ENCODE measurements at regions of chr6 and their contacts with region 1.

Region 1: GRCh38 chr6:31619805-31620585 is 520 bp upstream of the PRRC2A start:
- DNase-seq: peak; percentile 81 to 97 (median 94)
- ATAC-seq: peak; percentile 88
- H3K4me3 ChIP-seq: peak overlapping the region; percentile 90
- H3K4me3 Mint-ChIP-seq: peak overlapping the region; percentile 87 to 97 (median 93)
- H3K27ac ChIP-seq: peak overlapping the region; percentile 96
- H3K27ac Mint-ChIP-seq: peak overlapping the region; percentile 95 to 99 (median 96)
- H3K4me1 ChIP-seq: peaks cover 14 to 23% of the 10 kb centered on the region in 2 donors
- H3K4me1 Mint-ChIP-seq: peaks cover 26 to 60% (median 53%) of the 10 kb centered on the region in 7 donors
- H3K27me3 ChIP-seq: no peaks in the 10 kb centered on the region
- H3K27me3 Mint-ChIP-seq: no peaks in the 10 kb centered on the region

Region 2: DNA sequence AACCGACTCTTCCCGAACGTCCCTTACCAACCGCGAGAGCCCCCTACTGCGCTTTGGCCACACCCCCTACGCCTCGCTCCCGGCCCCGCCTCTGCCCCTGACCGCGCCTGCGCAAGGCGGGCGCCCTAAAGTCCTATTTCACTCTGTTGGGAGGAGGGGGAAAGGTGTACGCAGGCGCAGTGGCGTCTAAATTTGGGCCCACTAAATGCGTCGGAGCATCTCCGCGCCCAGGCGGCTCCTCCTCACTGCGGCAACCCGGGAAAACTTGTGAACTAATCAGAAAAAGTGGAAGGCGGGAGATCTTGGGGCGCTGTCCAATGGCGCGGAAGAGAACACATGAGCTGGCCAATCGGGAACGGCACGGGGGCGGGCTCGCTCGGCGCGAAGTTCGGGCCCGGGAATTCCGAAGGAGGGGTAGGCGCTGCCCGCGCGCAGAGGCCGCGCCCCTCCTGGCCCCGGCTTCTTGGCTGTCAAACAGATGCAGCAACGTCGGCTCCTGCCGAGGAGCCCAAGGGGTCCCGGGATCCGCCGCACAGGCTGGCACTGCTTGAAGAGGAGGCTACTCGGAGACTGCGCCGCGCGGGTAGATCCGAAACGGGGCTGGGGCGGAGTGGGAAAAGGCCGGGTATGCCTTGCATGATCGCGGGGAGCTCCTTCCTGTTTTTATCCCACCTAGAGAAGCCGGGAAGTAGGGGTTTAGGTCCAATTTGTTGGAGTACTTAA is 461.7 kb before region 1 on chr6 and contains the start of gene TCF19:
- CTCF ChIA-PET with region 1: no interaction called
- POLR2A ChIA-PET with region 1: no interaction called
- intact Hi-C with region 1: loop called in 1 of 2 experiments (anchors 1 kb)
- DNase-seq: peak; percentile 97 to 99 (median 98)
- ATAC-seq: peak; percentile 96
- H3K4me3 ChIP-seq: peak within 1 kb of the TSS; percentile 82
- H3K4me3 Mint-ChIP-seq: peak within 1 kb of the TSS; percentile 82 to 97 (median 91)
- H3K27ac ChIP-seq: peak within 1 kb of the TSS; percentile 82
- H3K27ac Mint-ChIP-seq: peak within 1 kb of the TSS; percentile 62 to 96 (median 89)
- H3K4me1 ChIP-seq: peaks cover 12 to 18% of the 10 kb centered on the region in 2 donors
- H3K4me1 Mint-ChIP-seq: peaks cover 21 to 56% (median 29%) of the 10 kb centered on the region in 7 donors
- H3K27me3 ChIP-seq: no peaks in the 10 kb centered on the region
- H3K27me3 Mint-ChIP-seq: peaks cover 0 to 2% (median 0%) of the 10 kb centered on the region in 5 donors
- total RNA-seq, gene TCF19: 4.3 to 78.9 (median 9.4) TPM

Region 3: DNA sequence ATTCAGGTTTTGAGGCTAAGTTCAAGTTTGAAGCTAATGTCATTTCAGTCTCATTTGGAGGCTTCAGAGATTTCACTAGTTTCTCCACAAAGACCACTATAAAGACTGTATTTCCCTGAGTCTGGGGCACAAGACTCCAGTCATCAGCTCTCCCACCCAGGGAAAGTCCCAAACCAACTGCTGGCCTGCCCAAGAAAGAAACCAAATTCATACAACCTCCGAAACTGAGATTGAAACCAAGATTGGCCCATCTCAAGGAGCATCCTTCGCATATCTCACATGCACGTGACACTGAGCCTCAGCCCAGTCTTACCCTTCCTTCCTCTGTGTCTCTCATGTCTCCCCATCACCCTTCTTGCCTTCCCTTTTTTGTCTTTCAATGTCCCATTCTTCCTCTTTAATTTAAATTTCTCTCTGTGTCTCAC is 51.4 kb before region 1 on chr6:
- CTCF ChIA-PET with region 1: interaction called, 4 read pairs
- POLR2A ChIA-PET with region 1: interaction called, 3,078 read pairs
- intact Hi-C with region 1: loop called in 1 of 2 experiments (anchors 2 kb)
- DNase-seq: peak in 7 of 9 donors; percentile 58 to 84 (median 68)
- ATAC-seq: peak; percentile 82
- H3K4me3 ChIP-seq: peak overlapping the region; percentile 23
- H3K4me3 Mint-ChIP-seq: peak overlapping the region; percentile 39 to 77 (median 68)
- H3K27ac ChIP-seq: peak overlapping the region; percentile 77
- H3K27ac Mint-ChIP-seq: peak overlapping the region; percentile 84 to 99 (median 94)
- H3K4me1 ChIP-seq: peaks cover 55 to 58% of the 10 kb centered on the region in 2 donors
- H3K4me1 Mint-ChIP-seq: peaks cover 57 to 88% (median 77%) of the 10 kb centered on the region in 7 donors
- H3K27me3 ChIP-seq: no peaks in the 10 kb centered on the region
- H3K27me3 Mint-ChIP-seq: peaks cover 0 to 41% (median 0%) of the 10 kb centered on the region in 5 donors

Region 4: DNA sequence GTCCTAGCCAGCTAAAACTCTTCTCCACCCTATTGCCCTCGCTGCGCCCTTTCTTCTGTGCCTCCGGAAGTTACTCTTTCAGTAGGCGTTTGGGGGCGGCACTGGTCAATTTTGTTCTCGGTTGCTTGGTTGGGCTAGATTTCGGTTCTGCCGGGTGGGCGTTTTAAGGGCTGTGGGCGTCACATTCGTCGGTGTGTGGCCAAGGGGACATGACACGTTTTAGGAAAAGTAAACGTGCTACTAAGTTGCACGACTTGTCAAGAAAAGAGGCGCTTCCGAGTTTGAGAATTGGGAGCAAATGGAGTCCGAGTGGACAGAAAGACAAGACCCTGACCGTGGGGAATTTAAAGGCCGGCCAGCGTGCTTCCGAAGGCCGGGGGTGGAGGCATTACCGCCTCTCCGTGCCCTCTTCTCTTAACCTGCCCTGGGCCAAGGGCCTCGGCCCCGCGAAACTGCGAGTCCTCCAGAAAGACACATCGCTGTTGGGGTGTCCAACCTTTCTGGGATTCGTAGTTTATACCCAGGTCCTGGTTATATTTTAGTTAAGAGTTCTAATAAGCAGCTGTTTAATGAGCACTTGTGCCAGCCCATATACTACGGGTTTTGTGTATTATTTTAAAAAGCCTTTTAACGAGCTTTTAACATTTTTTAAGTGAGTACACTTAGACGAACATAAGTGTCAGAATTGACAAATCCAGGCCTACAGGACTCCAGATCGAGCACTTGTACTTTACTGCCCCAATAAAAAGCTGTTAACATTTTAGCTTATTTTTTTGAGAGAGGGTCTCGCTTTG is 33.1 kb after region 1 on chr6:
- CTCF ChIA-PET with region 1: interaction called, 3 read pairs
- POLR2A ChIA-PET with region 1: interaction called, 43 read pairs
- intact Hi-C with region 1: loop called (anchors 1 kb)
- DNase-seq: peak in 2 of 9 donors; percentile 81 to 89
- ATAC-seq: peak; percentile 77
- H3K4me3 ChIP-seq: peak overlapping the region; percentile 66
- H3K4me3 Mint-ChIP-seq: peak overlapping the region; percentile 96 to 100 (median 99)
- H3K27ac ChIP-seq: peak overlapping the region; percentile 95
- H3K27ac Mint-ChIP-seq: peak overlapping the region; percentile 99 to 100 (median 100)
- H3K4me1 ChIP-seq: peaks cover 23 to 30% of the 10 kb centered on the region in 2 donors
- H3K4me1 Mint-ChIP-seq: peaks cover 39 to 71% (median 63%) of the 10 kb centered on the region in 7 donors
- H3K27me3 ChIP-seq: no peaks in the 10 kb centered on the region
- H3K27me3 Mint-ChIP-seq: no peaks in the 10 kb centered on the region

Region 5: DNA sequence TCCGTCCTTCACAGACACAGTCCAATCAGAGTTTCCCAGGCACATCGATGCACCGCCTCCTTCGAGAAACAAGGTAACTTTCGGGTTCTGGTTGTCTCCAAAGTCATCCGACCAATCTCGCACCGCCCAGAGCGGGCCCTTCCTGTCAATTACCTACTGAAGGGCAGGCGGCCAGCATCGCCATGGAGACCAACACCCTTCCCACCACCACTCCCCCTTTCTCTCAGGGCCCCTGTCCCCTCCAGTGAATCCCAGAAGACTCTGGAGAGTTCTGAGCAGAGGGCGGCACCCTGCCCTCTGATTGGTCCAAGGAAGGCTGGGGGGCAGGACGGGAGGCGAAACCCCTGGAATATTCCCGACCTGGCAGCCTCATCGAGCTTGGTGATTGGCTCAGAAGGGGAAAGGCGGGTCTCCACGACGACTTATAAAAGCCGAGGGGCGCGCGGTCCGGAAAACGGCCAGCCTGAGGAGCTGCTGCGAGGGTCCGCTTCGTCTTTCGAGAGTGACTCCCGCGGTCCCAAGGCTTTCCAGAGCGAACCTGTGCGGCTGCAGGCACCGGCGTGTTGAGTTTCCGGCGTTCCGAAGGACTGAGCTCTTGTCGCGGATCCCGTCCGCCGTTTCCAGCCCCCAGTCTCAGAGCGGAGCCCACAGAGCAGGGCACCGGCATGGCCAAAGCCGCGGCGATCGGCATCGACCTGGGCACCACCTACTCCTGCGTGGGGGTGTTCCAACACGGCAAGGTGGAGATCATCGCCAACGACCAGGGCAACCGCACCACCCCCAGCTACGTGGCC is 207.5 kb after region 1 on chr6 and contains the start of gene HSPA1B:
- CTCF ChIA-PET with region 1: no interaction called
- POLR2A ChIA-PET with region 1: interaction called, 5 read pairs
- intact Hi-C with region 1: loop called in 1 of 2 experiments (anchors 2 kb)
- DNase-seq: peak; percentile 55 to 96 (median 82)
- ATAC-seq: peak; percentile 80
- H3K4me3 ChIP-seq: peak within 1 kb of the TSS; percentile 74
- H3K4me3 Mint-ChIP-seq: peak within 1 kb of the TSS; percentile 85 to 97 (median 90)
- H3K27ac ChIP-seq: peak within 1 kb of the TSS; percentile 72
- H3K27ac Mint-ChIP-seq: peak within 1 kb of the TSS; percentile 93 to 99 (median 97)
- H3K4me1 ChIP-seq: peaks cover 12 to 17% of the 10 kb centered on the region in 2 donors
- H3K4me1 Mint-ChIP-seq: peaks cover 11 to 51% (median 46%) of the 10 kb centered on the region in 7 donors
- H3K27me3 ChIP-seq: no peaks in the 10 kb centered on the region
- H3K27me3 Mint-ChIP-seq: no peaks in the 10 kb centered on the region
- total RNA-seq, gene HSPA1B: 8.6 to 68.9 (median 28.9) TPM

Region 6: GRCh38 chr6:31958741-31959739 is 339.0 kb after region 1 on chr6 and contains the starts of genes NELFE and SKIC2:
- CTCF ChIA-PET with region 1: no interaction called
- POLR2A ChIA-PET with region 1: interaction called, 6 read pairs
- intact Hi-C with region 1: loop called (anchors 2 to 5 kb)
- DNase-seq: peak; percentile 94 to 99 (median 98)
- ATAC-seq: peak; percentile 98
- H3K4me3 ChIP-seq: peak within 1 kb of the TSS; percentile 89
- H3K4me3 Mint-ChIP-seq: peak within 1 kb of the TSS; percentile 91 to 100 (median 97)
- H3K27ac ChIP-seq: peak within 1 kb of the TSS; percentile 99
- H3K27ac Mint-ChIP-seq: peak within 1 kb of the TSS; percentile 91 to 99 (median 97)
- H3K4me1 ChIP-seq: peaks cover 18 to 20% of the 10 kb centered on the region in 2 donors
- H3K4me1 Mint-ChIP-seq: peaks cover 23 to 50% (median 39%) of the 10 kb centered on the region in 7 donors
- H3K27me3 ChIP-seq: no peaks in the 10 kb centered on the region
- H3K27me3 Mint-ChIP-seq: no peaks in the 10 kb centered on the region
- total RNA-seq, gene NELFE: 47.5 to 71.7 (median 59.1) TPM
- total RNA-seq, gene SKIC2: 85.6 to 139 (median 101) TPM

Measured in naive thymus-derived CD4-positive, alpha-beta T cell (primary cell).